ENCODE measurements at regions of chr10 and their contacts with region 1.

Region 1: DNA sequence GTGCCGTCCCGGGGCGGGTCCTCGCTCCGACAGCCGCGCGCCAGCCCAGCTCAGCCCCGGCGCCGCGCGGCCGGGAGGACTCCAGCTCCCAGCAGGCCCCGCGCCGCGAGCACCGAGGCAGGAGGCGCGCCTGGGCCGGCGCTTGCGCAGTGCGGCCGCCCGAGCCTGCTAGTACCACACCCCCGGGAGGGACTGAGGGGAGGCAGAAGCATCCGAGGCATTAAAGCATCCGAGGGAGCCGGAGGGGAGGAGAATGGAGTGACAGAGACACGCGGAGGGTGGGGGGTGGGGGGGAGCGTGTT is at the start of gene GRK5:
- DNase-seq: peak; percentile 94
- H3K4me3 ChIP-seq: peak within 1 kb of the TSS; percentile 67 to 93
- H3K27ac ChIP-seq: peak within 1 kb of the TSS; percentile 85 to 97
- H3K4me1 ChIP-seq: no peaks in the 10 kb centered on the region
- H3K27me3 ChIP-seq: no peaks in the 10 kb centered on the region
- CTCF ChIP-seq: no peak
- POLR2A ChIP-seq: no peak
- total RNA-seq, gene GRK5: 4.5 to 5.5 TPM

Region 2: DNA sequence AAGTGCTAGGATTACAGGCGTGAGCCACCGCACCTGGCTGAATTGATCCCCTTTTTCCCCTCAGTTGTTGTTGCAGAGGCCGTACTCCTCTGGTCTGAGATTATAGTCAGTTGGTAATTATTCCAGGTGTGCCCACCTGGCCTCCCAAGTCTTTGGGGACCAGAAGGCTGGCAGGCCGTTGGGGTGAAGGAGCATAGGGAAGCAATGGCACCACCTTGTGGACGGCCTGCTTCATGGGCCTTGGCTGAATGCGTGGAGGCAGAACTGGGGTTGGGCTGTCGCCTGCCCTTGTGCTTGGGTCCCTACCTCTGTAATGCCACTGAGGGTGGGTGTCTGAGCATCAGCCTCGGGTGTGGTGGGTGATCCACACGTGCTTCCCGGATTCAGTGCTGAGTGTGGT is 209.5 kb after region 1 on chr10:
- intact Hi-C with region 1: loop called (anchors 10 kb)
- DNase-seq: peak; percentile 72
- H3K4me3 ChIP-seq: no peak overlapping the region
- H3K27ac ChIP-seq: no peak overlapping the region
- H3K4me1 ChIP-seq: peaks cover 22% of the 10 kb centered on the region
- H3K27me3 ChIP-seq: no peaks in the 10 kb centered on the region
- CTCF ChIP-seq: peak; percentile 47 to 61 (median 57)
- POLR2A ChIP-seq: no peak

Region 3: GRCh38 chr10:119445311-119445934 is 238.1 kb after region 1 on chr10:
- intact Hi-C with region 1: loop called (anchors 10 kb)
- DNase-seq: peak; percentile 92
- H3K4me3 ChIP-seq: no peak overlapping the region
- H3K27ac ChIP-seq: no peak overlapping the region
- H3K4me1 ChIP-seq: peaks cover 4% of the 10 kb centered on the region
- H3K27me3 ChIP-seq: no peaks in the 10 kb centered on the region
- CTCF ChIP-seq: peak; percentile 91 to 99 (median 96)
- POLR2A ChIP-seq: no peak